ENCODE measurements at regions of chr1 and their contacts with region 1.

Region 1: GRCh38 chr1:66326867-66327266 is 207.1 kb upstream of the SGIP1 start:
- DNase-seq: no peak
- ATAC-seq: peak; percentile 8; the same call in 1 of the 3 replicates
- H3K4me3 ChIP-seq: no peak overlapping the region
- H3K27ac ChIP-seq: no peak overlapping the region
- H3K4me1 ChIP-seq: peaks cover 43% of the 10 kb centered on the region
- H3K27me3 ChIP-seq: no peaks in the 10 kb centered on the region
- CTCF ChIP-seq: no peak
- EP300 ChIP-seq: no peak
- POLR2A ChIP-seq: no peak
- RAD21 ChIP-seq: no peak

Region 2: GRCh38 chr1:66239834-66240233 is 87.0 kb before region 1 on chr1:
- CTCF ChIA-PET with region 1: no interaction called
- POLR2A ChIA-PET with region 1: no interaction called
- RAD21 ChIA-PET with region 1: no interaction called
- SMC1A ChIA-PET with region 1: no interaction called
- in situ Hi-C with region 1: no loop called
- intact Hi-C with region 1: no loop called
- DNase-seq: no peak
- ATAC-seq: peak; percentile 68
- H3K4me3 ChIP-seq: no peak overlapping the region
- H3K27ac ChIP-seq: no peak overlapping the region
- H3K4me1 ChIP-seq: no peaks in the 10 kb centered on the region; the same call in 1 of the 2 replicates
- H3K27me3 ChIP-seq: peaks cover 1 to 5% of the 10 kb centered on the region in 2 experiments; a peak in 1 of 4 replicates
- CTCF ChIP-seq: peak in 1 of 3 experiments; percentile 34; a peak in 2 of 6 replicates
- EP300 ChIP-seq: no peak
- POLR2A ChIP-seq: no peak
- RAD21 ChIP-seq: no peak

Region 3: GRCh38 chr1:66291047-66291868 is 35.6 kb before region 1 on chr1:
- CTCF ChIA-PET with region 1: interaction called, 6 read pairs
- POLR2A ChIA-PET with region 1: no interaction called
- RAD21 ChIA-PET with region 1: interaction called, 19 read pairs
- SMC1A ChIA-PET with region 1: interaction called, 290 read pairs
- in situ Hi-C with region 1: no loop called
- intact Hi-C with region 1: no loop called
- DNase-seq: no peak
- ATAC-seq: peak; percentile 49
- H3K4me3 ChIP-seq: no peak overlapping the region
- H3K27ac ChIP-seq: no peak overlapping the region
- H3K4me1 ChIP-seq: no peaks in the 10 kb centered on the region
- H3K27me3 ChIP-seq: no peaks in the 10 kb centered on the region
- CTCF ChIP-seq: no peak
- EP300 ChIP-seq: no peak
- POLR2A ChIP-seq: no peak
- RAD21 ChIP-seq: no peak

Region 4: DNA sequence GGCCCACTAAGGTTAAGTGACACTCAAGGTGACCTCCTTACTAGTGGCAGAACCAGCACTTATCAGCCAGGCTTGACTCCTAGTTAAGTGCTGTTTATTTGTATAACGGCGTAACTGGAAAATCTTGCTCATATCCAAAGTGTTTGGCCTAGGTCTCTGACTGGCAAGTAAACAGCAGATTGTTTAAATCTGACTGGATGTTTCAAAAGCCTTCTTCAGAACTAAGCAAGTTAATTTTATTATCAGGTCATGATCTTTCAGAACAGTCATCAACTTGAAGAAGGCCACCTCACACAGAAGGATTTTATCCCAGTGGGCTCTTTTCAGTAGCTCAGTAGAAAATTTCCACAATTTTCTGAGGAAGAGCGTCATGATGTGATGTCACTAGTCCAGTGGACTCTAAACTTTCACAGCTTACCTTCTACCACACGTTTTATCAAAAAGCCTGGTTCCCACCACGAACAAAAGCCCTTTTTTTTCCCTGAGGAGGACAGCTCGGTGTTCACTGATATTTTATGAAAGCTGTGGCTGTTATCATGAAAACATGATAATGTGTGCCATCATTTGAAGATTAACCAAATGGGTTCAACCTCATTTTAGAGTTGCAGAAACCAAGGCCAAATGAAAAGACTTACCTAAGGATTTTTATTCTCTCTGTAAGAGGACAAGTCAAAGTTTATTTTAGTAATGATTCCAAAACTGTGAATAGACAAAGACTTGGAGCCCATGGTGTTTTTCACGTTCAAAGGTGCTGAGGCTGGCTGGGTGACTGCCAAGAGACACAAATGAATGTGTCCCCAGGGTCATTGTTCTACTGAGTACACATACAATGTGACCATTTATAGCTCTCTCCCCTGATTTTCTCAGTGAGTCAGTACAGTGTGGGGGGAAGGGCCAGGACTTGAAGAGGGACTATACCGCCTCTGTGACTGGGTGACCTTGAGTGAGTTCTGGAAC is 216.2 kb after region 1 on chr1:
- CTCF ChIA-PET with region 1: no interaction called
- POLR2A ChIA-PET with region 1: no interaction called
- RAD21 ChIA-PET with region 1: no interaction called
- SMC1A ChIA-PET with region 1: no interaction called
- in situ Hi-C with region 1: no loop called
- intact Hi-C with region 1: no loop called
- DNase-seq: no peak
- ATAC-seq: no peak
- H3K4me3 ChIP-seq: no peak overlapping the region
- H3K27ac ChIP-seq: no peak overlapping the region
- H3K4me1 ChIP-seq: no peaks in the 10 kb centered on the region
- H3K27me3 ChIP-seq: no peaks in the 10 kb centered on the region
- CTCF ChIP-seq: no peak
- EP300 ChIP-seq: no peak
- POLR2A ChIP-seq: no peak
- RAD21 ChIP-seq: no peak

Measured in GM12878 (cell line).